HEK293T (cell line): ENCODE measurements at regions of chr15 and their contacts with region 1.

Region 1: DNA sequence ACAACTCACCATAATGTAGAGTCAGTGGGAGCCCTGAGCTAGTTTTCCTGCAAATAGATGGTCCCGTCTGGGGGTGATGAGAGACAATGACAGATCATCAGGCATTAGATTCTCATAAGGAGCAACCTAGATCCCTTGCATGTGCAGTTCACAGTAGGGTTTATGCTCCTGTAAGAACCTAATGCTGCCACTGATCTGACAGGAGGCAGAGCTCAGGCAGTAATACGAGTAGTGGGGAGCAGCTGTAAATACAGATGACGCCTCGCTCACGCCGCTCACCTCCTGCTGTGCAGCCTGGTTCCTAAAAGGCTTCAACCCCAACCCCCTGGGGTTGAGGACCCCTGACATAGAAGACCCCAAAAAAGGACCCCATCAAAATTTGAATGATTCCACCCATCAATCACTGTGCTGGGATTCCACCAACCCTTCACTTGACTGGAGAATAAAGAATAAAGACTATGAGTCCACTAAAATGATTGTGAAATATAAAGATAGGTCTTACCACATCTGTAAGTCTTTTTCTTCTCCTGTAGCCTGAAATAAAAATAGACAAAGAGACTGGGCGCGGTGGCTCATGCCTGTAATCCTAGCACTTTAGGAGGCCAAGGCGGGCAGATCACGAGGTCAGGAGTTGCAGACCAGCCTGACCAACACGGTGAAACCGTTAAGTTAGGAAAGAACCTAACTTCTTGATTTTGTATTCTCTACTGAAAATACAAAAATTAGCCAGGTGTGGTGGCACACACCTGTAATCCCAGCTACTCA is 9.9 kb upstream of the UBL7 start:
- DNase-seq: no peak

Region 2: DNA sequence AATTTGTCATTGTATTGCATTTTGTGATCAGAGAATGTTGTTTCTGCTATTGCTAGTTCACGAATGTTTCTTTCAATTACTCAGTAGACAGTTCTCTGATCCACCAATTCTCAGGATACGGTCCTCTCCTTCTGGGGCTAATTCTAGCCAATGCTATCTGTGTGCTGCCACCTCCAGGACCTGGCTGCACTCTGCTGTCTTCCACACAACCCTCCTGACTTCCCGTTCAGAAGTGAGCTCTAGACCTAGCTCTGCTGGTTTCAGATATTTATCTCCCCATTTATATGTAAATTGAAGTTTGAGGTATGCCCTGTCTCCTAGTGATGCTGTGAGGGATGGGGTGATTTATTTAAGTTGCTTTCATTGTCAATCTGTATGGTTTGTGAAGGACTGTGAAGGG is 11.8 kb after region 1 on chr15:
- CTCF ChIA-PET with region 1: interaction called, 10 read pairs
- POLR2A ChIA-PET with region 1: no interaction called
- DNase-seq: no peak